B cell (primary cell): ENCODE measurements at regions of chr19 and their contacts with region 1.

Region 1: GRCh38 chr19:58154679-58155648 is 4.4 kb upstream of the ZNF329 start:
- DNase-seq: peak; percentile 96
- ATAC-seq: peak; percentile 87
- H3K4me3 ChIP-seq: peak overlapping the region; percentile 32 to 98 (median 91)
- H3K4me3 Mint-ChIP-seq: peak overlapping the region; percentile 88
- H3K27ac ChIP-seq: peak overlapping the region; percentile 82 to 91
- H3K27ac Mint-ChIP-seq: peak overlapping the region; percentile 90
- H3K4me1 ChIP-seq: peaks cover 12 to 26% of the 10 kb centered on the region in 2 donors
- H3K4me1 Mint-ChIP-seq: peaks cover 12% of the 10 kb centered on the region
- H3K27me3 ChIP-seq: no peaks in the 10 kb centered on the region
- H3K27me3 Mint-ChIP-seq: no peaks in the 10 kb centered on the region
- CTCF ChIP-seq: peak; percentile 94

Region 2: GRCh38 chr19:57410877-57411671 is 743.9 kb before region 1 on chr19 and contains the start of gene ZNF17:
- CTCF ChIA-PET with region 1: no interaction called
- POLR2A ChIA-PET with region 1: no interaction called
- intact Hi-C with region 1: loop called (anchors 1 kb)
- DNase-seq: peak; percentile 93
- ATAC-seq: peak; percentile 100
- H3K4me3 ChIP-seq: peak within 1 kb of the TSS; percentile 66 to 98 (median 89)
- H3K4me3 Mint-ChIP-seq: peak within 1 kb of the TSS; percentile 97
- H3K27ac ChIP-seq: peak within 1 kb of the TSS; percentile 22 to 77
- H3K27ac Mint-ChIP-seq: peak within 1 kb of the TSS; percentile 89
- H3K4me1 ChIP-seq: peaks cover 12 to 17% of the 10 kb centered on the region in 2 donors
- H3K4me1 Mint-ChIP-seq: peaks cover 26% of the 10 kb centered on the region
- H3K27me3 ChIP-seq: no peaks in the 10 kb centered on the region
- H3K27me3 Mint-ChIP-seq: no peaks in the 10 kb centered on the region
- CTCF ChIP-seq: no peak
- total RNA-seq, gene ZNF17: 25.8 and 30.7 TPM in 2 replicates

Region 3: DNA sequence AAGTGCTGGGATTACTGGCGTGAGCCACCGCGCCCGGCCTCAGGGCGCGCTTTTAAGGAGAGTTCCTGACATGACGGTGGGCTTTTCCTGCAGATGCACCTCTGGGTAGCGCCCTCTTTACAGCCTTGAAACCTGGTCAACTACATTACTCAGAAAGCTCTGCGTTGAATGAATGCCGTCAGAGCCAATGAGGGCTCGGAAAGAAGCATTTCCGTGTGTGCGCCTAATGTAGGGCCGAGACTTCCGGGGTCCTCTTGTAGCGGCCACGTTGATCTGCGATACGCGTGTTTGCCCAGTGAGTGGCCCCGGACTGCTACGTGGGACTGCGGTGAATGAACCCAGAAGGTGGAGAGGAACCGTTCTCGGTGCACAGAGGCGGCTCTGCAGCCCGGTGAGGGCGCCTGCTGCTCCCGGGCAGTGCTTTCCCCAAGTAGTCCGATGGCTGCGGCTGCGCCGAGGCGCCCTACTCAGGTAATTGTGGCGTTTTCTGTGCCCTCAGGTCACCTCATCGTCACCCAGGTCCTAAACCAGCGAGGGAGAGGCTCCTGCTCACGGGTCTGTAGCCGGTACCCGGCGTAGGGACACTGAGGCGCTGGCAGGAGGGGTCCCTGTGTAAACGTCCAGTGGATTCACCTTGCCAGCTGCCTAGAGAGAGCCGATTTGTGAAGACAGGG is 335.4 kb before region 1 on chr19:
- CTCF ChIA-PET with region 1: interaction called, 5 read pairs
- POLR2A ChIA-PET with region 1: no interaction called
- intact Hi-C with region 1: loop called (anchors 5 kb)
- DNase-seq: peak; percentile 90
- ATAC-seq: peak; percentile 83
- H3K4me3 ChIP-seq: peak overlapping the region; percentile 78 to 92 (median 83)
- H3K4me3 Mint-ChIP-seq: peak overlapping the region; percentile 94
- H3K27ac ChIP-seq: peak overlapping the region; percentile 75 to 88
- H3K27ac Mint-ChIP-seq: peak overlapping the region; percentile 97
- H3K4me1 ChIP-seq: peaks cover 12 to 17% of the 10 kb centered on the region in 2 donors
- H3K4me1 Mint-ChIP-seq: peaks cover 58% of the 10 kb centered on the region
- H3K27me3 ChIP-seq: no peaks in the 10 kb centered on the region
- H3K27me3 Mint-ChIP-seq: no peaks in the 10 kb centered on the region
- CTCF ChIP-seq: no peak

Region 4: GRCh38 chr19:58002384-58003173 is 152.4 kb before region 1 on chr19 and contains the start of gene ZNF606:
- CTCF ChIA-PET with region 1: no interaction called
- POLR2A ChIA-PET with region 1: interaction called, 3 read pairs
- intact Hi-C with region 1: loop called (anchors 5 kb)
- DNase-seq: peak; percentile 93
- ATAC-seq: peak; percentile 96
- H3K4me3 ChIP-seq: peak within 1 kb of the TSS; percentile 77 to 98 (median 94)
- H3K4me3 Mint-ChIP-seq: peak within 1 kb of the TSS; percentile 91
- H3K27ac ChIP-seq: peak within 1 kb of the TSS; percentile 81 to 91
- H3K27ac Mint-ChIP-seq: peak within 1 kb of the TSS; percentile 88
- H3K4me1 ChIP-seq: peaks cover 22 to 27% of the 10 kb centered on the region in 2 donors
- H3K4me1 Mint-ChIP-seq: peaks cover 35% of the 10 kb centered on the region
- H3K27me3 ChIP-seq: no peaks in the 10 kb centered on the region
- H3K27me3 Mint-ChIP-seq: no peaks in the 10 kb centered on the region
- CTCF ChIP-seq: no peak
- total RNA-seq, gene ZNF606: 48.1 and 48.4 TPM in 2 replicates

Region 5: DNA sequence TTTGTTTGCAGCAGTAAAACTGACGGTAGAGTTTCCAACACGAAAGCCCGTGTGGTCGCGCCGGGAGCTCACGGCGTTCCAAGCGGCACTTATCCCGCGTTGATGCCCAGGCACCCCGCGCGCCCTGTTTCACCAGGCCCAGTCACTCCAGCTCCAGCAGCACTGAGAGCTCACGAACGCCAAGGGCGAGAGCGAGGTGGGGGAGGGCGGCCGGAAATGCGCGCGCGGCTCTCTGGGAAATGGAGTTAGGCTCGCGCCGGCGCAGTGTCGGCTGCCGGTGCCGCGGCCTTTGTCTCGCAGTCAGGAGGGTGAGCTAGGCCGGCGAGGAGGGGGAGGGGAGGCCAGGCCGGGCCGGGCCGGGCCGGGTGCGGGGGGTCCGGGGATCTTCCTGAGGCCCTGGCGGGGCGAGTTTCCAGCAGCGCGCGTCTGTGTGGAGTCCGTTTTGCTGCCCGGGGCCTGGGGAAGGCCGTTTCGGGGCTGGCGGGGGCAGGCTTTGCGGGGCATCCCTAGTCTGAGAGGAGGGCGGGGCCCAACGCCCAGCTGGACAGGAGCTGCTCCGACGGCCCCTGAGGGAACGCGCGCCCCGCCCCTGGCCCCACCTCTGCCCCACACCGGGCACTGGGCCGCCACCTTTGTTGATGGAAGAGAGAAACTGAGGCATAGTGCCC is 95.8 kb before region 1 on chr19 and contains the start of gene ZNF135:
- CTCF ChIA-PET with region 1: interaction called, 4 read pairs
- POLR2A ChIA-PET with region 1: interaction called, 14 read pairs
- intact Hi-C with region 1: loop called (anchors 1 kb)
- DNase-seq: peak; percentile 88
- ATAC-seq: peak; percentile 86
- H3K4me3 ChIP-seq: peak within 1 kb of the TSS; percentile 9 to 81 (median 64)
- H3K4me3 Mint-ChIP-seq: peak within 1 kb of the TSS; percentile 86
- H3K27ac ChIP-seq: peak within 1 kb of the TSS; percentile 87 to 92
- H3K27ac Mint-ChIP-seq: peak within 1 kb of the TSS; percentile 91
- H3K4me1 ChIP-seq: peaks cover 8 to 16% of the 10 kb centered on the region in 2 donors
- H3K4me1 Mint-ChIP-seq: peaks cover 14% of the 10 kb centered on the region
- H3K27me3 ChIP-seq: peaks cover 0 to 7% (median 2%) of the 10 kb centered on the region in 4 experiments
- H3K27me3 Mint-ChIP-seq: peaks cover 16% of the 10 kb centered on the region
- CTCF ChIP-seq: no peak
- total RNA-seq, gene ZNF135: 10.0 and 10.1 TPM in 2 replicates

Region 6: GRCh38 chr19:58182989-58183816 is 28.2 kb after region 1 on chr19 and contains the start of gene ZNF274:
- CTCF ChIA-PET with region 1: interaction called, 4 read pairs
- POLR2A ChIA-PET with region 1: interaction called, 4 read pairs
- intact Hi-C with region 1: loop called (anchors 2 kb)
- DNase-seq: peak; percentile 97
- ATAC-seq: peak; percentile 85
- H3K4me3 ChIP-seq: peak within 1 kb of the TSS; percentile 78 to 100 (median 88)
- H3K4me3 Mint-ChIP-seq: peak within 1 kb of the TSS; percentile 96
- H3K27ac ChIP-seq: peak within 1 kb of the TSS; percentile 99 to 100
- H3K27ac Mint-ChIP-seq: peak within 1 kb of the TSS; percentile 100
- H3K4me1 ChIP-seq: peaks cover 12 to 20% of the 10 kb centered on the region in 2 donors
- H3K4me1 Mint-ChIP-seq: peaks cover 26% of the 10 kb centered on the region
- H3K27me3 ChIP-seq: no peaks in the 10 kb centered on the region
- H3K27me3 Mint-ChIP-seq: no peaks in the 10 kb centered on the region
- CTCF ChIP-seq: no peak
- total RNA-seq, gene ZNF274: 83.7 and 85.4 TPM in 2 replicates

Region 7: GRCh38 chr19:58278157-58279041 is 123.4 kb after region 1 on chr19 and contains the start of gene ZNF8:
- CTCF ChIA-PET with region 1: no interaction called
- POLR2A ChIA-PET with region 1: no interaction called
- intact Hi-C with region 1: no loop called
- DNase-seq: peak; percentile 96
- ATAC-seq: peak; percentile 98
- H3K4me3 ChIP-seq: peak within 1 kb of the TSS; percentile 72 to 98 (median 95)
- H3K4me3 Mint-ChIP-seq: peak within 1 kb of the TSS; percentile 91
- H3K27ac ChIP-seq: peak within 1 kb of the TSS; percentile 73 to 86
- H3K27ac Mint-ChIP-seq: peak within 1 kb of the TSS; percentile 93
- H3K4me1 ChIP-seq: peaks cover 13 to 19% of the 10 kb centered on the region in 2 donors
- H3K4me1 Mint-ChIP-seq: peaks cover 38% of the 10 kb centered on the region
- H3K27me3 ChIP-seq: no peaks in the 10 kb centered on the region
- H3K27me3 Mint-ChIP-seq: no peaks in the 10 kb centered on the region
- CTCF ChIP-seq: no peak
- total RNA-seq, gene ZNF8: 7.9 and 8.0 TPM in 2 replicates